HCT116 (cell line): ENCODE measurements at regions of chr7 and their contacts with region 1.

Region 1: GRCh38 chr7:55641273-55641691 is 69.0 kb upstream of the VOPP1 start:
- DNase-seq: peak; percentile 77
- ATAC-seq: peak; percentile 99
- H3K4me3 ChIP-seq: no peak overlapping the region
- H3K27ac ChIP-seq: no peak overlapping the region
- H3K4me1 ChIP-seq: no peaks in the 10 kb centered on the region
- H3K27me3 ChIP-seq: no peaks in the 10 kb centered on the region
- CTCF ChIP-seq: peak; percentile 72 to 85 (median 79)
- POLR2A ChIP-seq: no peak
- RAD21 ChIP-seq: peak; percentile 94

Region 2: DNA sequence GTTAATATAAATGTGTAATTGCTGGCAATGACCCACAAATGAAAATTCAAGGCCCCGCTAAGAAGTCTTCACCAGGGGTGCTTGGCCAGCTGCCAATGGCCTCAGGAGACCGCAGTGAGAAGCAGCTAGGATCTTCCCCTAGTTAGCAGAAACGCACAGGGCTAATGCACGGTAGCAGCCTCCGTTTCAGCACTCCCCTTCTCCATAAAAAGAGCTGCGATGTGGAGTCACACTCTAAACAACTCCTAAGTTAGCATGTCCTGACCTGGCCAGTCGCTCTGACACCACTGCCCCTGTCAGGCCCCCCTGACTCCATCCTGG is 82.3 kb after region 1 on chr7:
- CTCF ChIA-PET with region 1: interaction called, 13 read pairs
- POLR2A ChIA-PET with region 1: no interaction called
- RAD21 ChIA-PET with region 1: interaction called in 1 of 2 experiments, 4 read pairs
- intact Hi-C with region 1: loop called (anchors 5 kb)
- DNase-seq: no peak
- ATAC-seq: no peak
- H3K4me3 ChIP-seq: no peak overlapping the region
- H3K27ac ChIP-seq: no peak overlapping the region
- H3K4me1 ChIP-seq: no peaks in the 10 kb centered on the region
- H3K27me3 ChIP-seq: no peaks in the 10 kb centered on the region
- CTCF ChIP-seq: no peak
- POLR2A ChIP-seq: no peak
- RAD21 ChIP-seq: no peak

Region 3: GRCh38 chr7:55964261-55965099 is 323.2 kb after region 1 on chr7 and contains the start of gene NIPSNAP2:
- CTCF ChIA-PET with region 1: interaction called, 12 read pairs
- POLR2A ChIA-PET with region 1: no interaction called
- RAD21 ChIA-PET with region 1: no interaction called
- intact Hi-C with region 1: loop called (anchors 2 kb)
- DNase-seq: peak; percentile 15
- ATAC-seq: peak; percentile 88
- H3K4me3 ChIP-seq: peak within 1 kb of the TSS; percentile 81 to 90
- H3K27ac ChIP-seq: peak within 1 kb of the TSS; percentile 63
- H3K4me1 ChIP-seq: peaks cover 9 to 18% of the 10 kb centered on the region in 2 experiments
- H3K27me3 ChIP-seq: no peaks in the 10 kb centered on the region
- CTCF ChIP-seq: peak in 2 of 3 experiments; percentile 19 to 31; a peak in 2 of 6 replicates
- POLR2A ChIP-seq: no peak
- RAD21 ChIP-seq: peak; percentile 33
- total RNA-seq, gene NIPSNAP2: 62.4 TPM

Region 4: GRCh38 chr7:56009695-56010094 is 368.4 kb after region 1 on chr7:
- CTCF ChIA-PET with region 1: no interaction called
- POLR2A ChIA-PET with region 1: no interaction called
- RAD21 ChIA-PET with region 1: no interaction called
- intact Hi-C with region 1: loop called (anchors 10 kb)
- DNase-seq: no peak
- ATAC-seq: peak; percentile 13; the same call in 1 of the 2 replicates
- H3K4me3 ChIP-seq: no peak overlapping the region
- H3K27ac ChIP-seq: 0 out of 2 replicates have a peak overlapping the region, but pooled peaks have one; percentile 26
- H3K4me1 ChIP-seq: no peaks in the 10 kb centered on the region
- H3K27me3 ChIP-seq: no peaks in the 10 kb centered on the region
- CTCF ChIP-seq: no peak
- POLR2A ChIP-seq: no peak
- RAD21 ChIP-seq: no peak

Region 5: DNA sequence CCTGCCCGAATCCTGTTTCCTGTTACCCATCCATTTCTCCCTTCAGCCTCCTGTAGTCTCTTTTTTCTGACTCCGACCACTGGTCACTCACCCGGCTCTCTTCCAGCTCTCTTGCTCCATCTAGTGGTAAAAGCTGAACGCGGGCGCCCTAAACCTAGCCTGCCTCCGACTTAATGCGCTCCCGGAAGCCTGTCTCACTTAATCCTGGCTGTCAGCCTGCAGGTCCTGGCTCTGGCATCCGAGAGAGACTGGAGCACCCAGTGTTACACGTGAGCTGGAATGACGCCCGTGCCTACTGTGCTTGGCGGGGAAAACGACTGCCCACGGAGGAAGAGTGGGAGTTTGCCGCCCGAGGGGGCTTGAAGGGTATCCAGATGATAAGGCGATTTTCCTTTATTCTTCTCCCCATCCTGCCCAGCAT is 433.1 kb after region 1 on chr7:
- CTCF ChIA-PET with region 1: interaction called, 15 read pairs
- POLR2A ChIA-PET with region 1: no interaction called
- RAD21 ChIA-PET with region 1: interaction called in 1 of 2 experiments, 4 read pairs
- intact Hi-C with region 1: loop called (anchors 1 kb)
- DNase-seq: no peak
- ATAC-seq: peak; percentile 93
- H3K4me3 ChIP-seq: no peak overlapping the region
- H3K27ac ChIP-seq: peak overlapping the region; percentile 42
- H3K4me1 ChIP-seq: no peaks in the 10 kb centered on the region
- H3K27me3 ChIP-seq: no peaks in the 10 kb centered on the region
- CTCF ChIP-seq: peak; percentile 85 to 96 (median 88)
- POLR2A ChIP-seq: no peak
- RAD21 ChIP-seq: peak; percentile 92

Region 6: GRCh38 chr7:56092789-56093531 is 451.7 kb after region 1 on chr7 and contains the start of gene PHKG1:
- CTCF ChIA-PET with region 1: interaction called, 21 read pairs
- POLR2A ChIA-PET with region 1: no interaction called
- RAD21 ChIA-PET with region 1: no interaction called
- intact Hi-C with region 1: no loop called
- DNase-seq: no peak
- ATAC-seq: peak; percentile 95
- H3K4me3 ChIP-seq: no peak within 1 kb of the TSS
- H3K27ac ChIP-seq: peak within 1 kb of the TSS; percentile 29; the same call in 1 of the 2 replicates
- H3K4me1 ChIP-seq: peaks cover 4 to 8% of the 10 kb centered on the region in 2 experiments; a peak in 3 of 4 replicates
- H3K27me3 ChIP-seq: no peaks in the 10 kb centered on the region
- CTCF ChIP-seq: peak; percentile 39 to 54 (median 54); a peak in 5 of 6 replicates
- POLR2A ChIP-seq: no peak
- RAD21 ChIP-seq: peak; percentile 59
- total RNA-seq, gene PHKG1: 1.1 TPM